Tibial artery (tissue), 4 donors: ENCODE measurements at regions of chr18 and their contacts with region 1.

Region 1: DNA sequence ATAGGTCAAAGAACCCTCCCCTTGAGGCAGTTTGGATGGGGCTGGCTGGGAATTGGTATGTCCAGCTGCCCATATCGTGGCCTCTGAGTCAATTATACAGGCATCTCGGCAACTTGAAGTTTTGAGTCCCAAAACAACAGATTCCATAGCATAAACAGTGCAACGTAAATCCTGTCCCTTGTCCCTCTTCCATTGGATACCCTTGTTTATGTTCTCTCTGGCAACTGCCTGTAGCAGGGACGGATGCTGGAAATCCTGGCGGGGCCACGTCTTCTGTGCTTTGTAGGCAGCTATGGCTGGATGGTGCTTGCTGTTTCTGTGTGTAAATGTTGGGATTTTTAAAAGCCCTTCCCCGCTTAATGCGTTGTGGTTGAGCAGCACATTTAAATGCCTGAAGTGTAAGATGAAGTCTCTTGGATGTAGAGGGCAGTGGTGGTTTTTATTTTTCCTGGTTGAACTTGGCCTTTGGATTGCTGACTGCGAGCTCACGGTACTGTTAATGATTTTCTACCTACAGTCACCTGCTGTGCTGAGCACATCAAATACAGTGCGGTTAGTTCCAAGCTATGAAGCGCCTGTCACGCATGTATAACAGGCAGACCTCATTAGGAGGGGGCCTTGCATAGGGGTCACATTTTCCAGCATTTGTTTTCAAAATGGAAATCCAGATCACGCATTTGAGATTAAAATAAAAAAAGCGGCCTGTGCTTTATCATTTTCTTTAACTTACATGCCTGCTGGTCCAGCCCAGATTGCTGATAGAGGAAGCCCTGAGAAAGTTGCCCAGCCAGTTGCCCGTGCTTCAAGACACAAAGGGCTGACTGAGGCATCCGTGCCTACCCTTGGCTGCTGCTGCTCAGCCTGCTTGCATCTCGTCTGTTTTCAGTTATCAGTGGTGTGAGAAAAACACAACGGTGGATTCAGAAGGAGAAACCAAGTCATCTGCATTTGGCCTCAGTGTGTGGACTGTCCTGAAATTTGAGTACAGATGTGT is 84.7 kb downstream of the NEDD4L start:
- DNase-seq: no peak
- H3K4me3 ChIP-seq: no peak overlapping the region
- H3K27ac ChIP-seq: no peak overlapping the region
- H3K4me1 ChIP-seq: no peaks in the 10 kb centered on the region
- H3K27me3 ChIP-seq: no peaks in the 10 kb centered on the region
- CTCF ChIP-seq: no peak

Region 2: DNA sequence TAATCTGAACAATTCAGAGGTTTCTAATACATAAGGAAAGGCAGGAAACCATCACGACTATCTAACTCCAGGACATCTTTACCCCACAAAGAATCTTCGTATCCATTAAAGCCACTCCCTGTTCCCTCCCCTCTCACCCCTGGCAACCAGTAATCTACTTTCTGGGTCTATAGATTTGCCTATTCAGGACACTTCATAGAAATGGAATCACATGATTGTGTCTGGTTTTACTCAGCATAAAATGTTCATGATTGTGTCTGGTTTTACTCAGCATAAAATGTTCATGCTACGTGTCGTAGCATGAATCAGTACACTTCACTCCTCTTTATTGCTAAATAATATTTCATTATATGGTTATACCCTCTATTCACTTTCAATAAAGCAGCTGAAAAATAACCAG is 553.8 kb before region 1 on chr18:
- intact Hi-C with region 1: no loop called
- DNase-seq: no peak
- H3K4me3 ChIP-seq: no peak overlapping the region
- H3K27ac ChIP-seq: no peak overlapping the region
- H3K4me1 ChIP-seq: no peaks in the 10 kb centered on the region
- H3K27me3 ChIP-seq: no peaks in the 10 kb centered on the region
- CTCF ChIP-seq: no peak

Region 3: GRCh38 chr18:57630002-57630753 is 498.5 kb before region 1 on chr18:
- intact Hi-C with region 1: loop called (anchors 5 kb)
- DNase-seq: peak; percentile 98 to 99
- H3K4me3 ChIP-seq: peak overlapping the region; percentile 57 to 62
- H3K27ac ChIP-seq: peak overlapping the region; percentile 74 to 75
- H3K4me1 ChIP-seq: peaks cover 0 to 19% (median 2%) of the 10 kb centered on the region in 4 donors
- H3K27me3 ChIP-seq: no peaks in the 10 kb centered on the region
- CTCF ChIP-seq: peak; percentile 64 to 74

Region 4: GRCh38 chr18:57881818-57882413 is 246.8 kb before region 1 on chr18:
- intact Hi-C with region 1: loop called (anchors 5 kb)
- DNase-seq: peak; percentile 61 to 72
- H3K4me3 ChIP-seq: no peak overlapping the region
- H3K27ac ChIP-seq: no peak overlapping the region
- H3K4me1 ChIP-seq: peaks cover 0 to 4% (median 0%) of the 10 kb centered on the region in 4 donors
- H3K27me3 ChIP-seq: no peaks in the 10 kb centered on the region
- CTCF ChIP-seq: peak; percentile 79 to 85

Region 5: DNA sequence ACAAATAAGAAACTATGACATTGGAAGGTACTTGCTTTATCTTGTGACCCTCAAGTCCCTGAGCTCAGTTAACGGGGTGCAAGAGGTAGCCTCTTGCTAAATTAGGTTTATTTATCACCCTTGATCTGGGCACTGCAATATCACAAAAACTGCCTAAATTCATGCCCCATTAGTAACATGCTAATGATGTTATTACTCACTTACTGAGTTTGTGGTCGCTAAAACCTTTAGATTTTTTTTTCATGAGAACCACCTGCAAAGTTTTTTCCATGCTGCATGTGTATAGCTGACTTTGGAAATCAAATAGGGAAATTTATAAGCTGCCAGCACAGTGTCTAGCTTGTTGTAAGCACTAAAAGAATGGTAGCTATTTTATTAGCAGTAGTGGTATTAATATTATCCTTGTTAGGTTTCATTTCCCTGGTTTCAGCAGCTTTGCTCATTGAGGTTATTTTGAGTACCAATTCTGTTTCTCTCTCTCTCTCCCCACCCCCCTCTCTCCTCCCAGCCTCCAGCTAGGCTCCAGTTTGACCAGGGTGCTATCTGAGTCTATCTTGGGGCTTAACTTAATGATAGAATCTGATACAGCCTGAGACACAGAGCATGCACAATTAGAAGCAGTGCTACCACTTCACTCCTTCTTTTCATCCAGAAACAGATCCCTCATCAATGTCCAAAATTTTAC is 236.8 kb before region 1 on chr18:
- intact Hi-C with region 1: loop called (anchors 5 kb)
- DNase-seq: no peak
- H3K4me3 ChIP-seq: no peak overlapping the region
- H3K27ac ChIP-seq: no peak overlapping the region
- H3K4me1 ChIP-seq: no peaks in the 10 kb centered on the region
- H3K27me3 ChIP-seq: no peaks in the 10 kb centered on the region
- CTCF ChIP-seq: no peak

Region 6: DNA sequence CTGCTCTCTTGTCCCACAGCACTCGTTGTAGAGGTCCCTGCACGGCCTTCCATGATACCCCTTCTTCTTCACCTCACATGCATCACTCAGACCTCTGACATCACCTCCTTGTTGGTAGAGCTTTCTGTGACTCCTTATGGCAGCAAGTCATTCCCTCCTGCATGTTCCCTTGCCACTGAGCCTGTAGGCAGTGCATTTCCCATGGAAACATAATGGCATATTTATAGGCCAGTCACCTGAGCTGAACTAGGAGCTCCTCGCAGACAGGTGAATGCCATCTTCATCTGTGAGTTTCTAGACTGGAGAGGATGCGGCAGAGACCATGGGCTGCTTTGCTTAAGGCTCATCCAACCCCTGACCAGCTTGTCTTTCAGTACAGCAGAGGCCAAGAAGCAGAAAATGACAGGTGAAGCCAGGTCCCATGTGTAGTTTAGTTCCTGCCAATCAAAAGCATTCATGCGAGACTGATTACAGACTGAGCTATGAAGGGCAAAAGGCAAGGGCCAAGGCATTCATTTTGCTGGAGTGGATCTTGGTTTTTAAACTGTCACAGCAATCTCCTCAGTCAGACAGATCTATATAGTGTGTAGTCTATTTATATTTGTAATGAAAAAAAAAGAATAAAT is 144.1 kb before region 1 on chr18:
- intact Hi-C with region 1: no loop called
- DNase-seq: no peak
- H3K4me3 ChIP-seq: no peak overlapping the region
- H3K27ac ChIP-seq: no peak overlapping the region
- H3K4me1 ChIP-seq: no peaks in the 10 kb centered on the region
- H3K27me3 ChIP-seq: no peaks in the 10 kb centered on the region
- CTCF ChIP-seq: no peak